ENCODE measurements at regions of chr2 and their contacts with region 1.

Region 1: GRCh38 chr2:27754138-27754588 is 17.4 kb upstream of the MRPL33 start:
- DNase-seq: peak; percentile 72 to 86 (median 73)
- ATAC-seq: peak; percentile 91
- H3K4me3 ChIP-seq: no peak overlapping the region
- H3K27ac ChIP-seq: no peak overlapping the region
- H3K4me1 ChIP-seq: peaks cover 10 to 18% of the 10 kb centered on the region in 2 experiments
- H3K27me3 ChIP-seq: no peaks in the 10 kb centered on the region
- CTCF ChIP-seq: peak; percentile 93 to 96 (median 95)
- EP300 ChIP-seq: no peak; the same call in 1 of the 2 replicates
- POLR2A ChIP-seq: no peak
- RAD21 ChIP-seq: peak; percentile 93 to 95

Region 2: DNA sequence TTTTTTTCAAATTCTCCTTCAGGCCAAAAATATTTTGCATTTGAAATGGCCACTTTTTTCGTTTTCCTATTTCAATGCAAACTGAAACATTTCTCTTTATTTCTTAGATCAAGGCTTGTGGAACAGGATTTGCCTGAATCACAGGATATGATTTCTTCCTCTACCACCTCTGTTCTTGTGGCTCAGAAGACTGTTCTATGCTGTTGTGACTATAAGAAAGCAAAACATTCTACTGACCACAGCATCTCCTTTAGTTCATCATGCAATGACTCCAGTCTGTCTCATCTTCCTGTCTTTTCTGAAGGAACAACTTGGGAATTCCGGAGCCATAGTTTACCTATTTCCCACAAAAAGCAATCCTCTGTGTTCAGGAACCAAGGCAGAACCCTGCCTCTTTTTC is 187.5 kb before region 1 on chr2:
- CTCF ChIA-PET with region 1: no interaction called
- POLR2A ChIA-PET with region 1: no interaction called
- in situ Hi-C with region 1: no loop called
- intact Hi-C with region 1: no loop called
- DNase-seq: no peak
- ATAC-seq: no peak
- H3K4me3 ChIP-seq: no peak overlapping the region
- H3K27ac ChIP-seq: no peak overlapping the region
- H3K4me1 ChIP-seq: no peaks in the 10 kb centered on the region
- H3K27me3 ChIP-seq: peaks cover 0 to 20% of the 10 kb centered on the region in 2 experiments; a peak in 3 of 5 replicates
- CTCF ChIP-seq: no peak
- EP300 ChIP-seq: no peak
- POLR2A ChIP-seq: no peak
- RAD21 ChIP-seq: no peak

Region 3: GRCh38 chr2:27703638-27704341 is 50.4 kb before region 1 on chr2:
- CTCF ChIA-PET with region 1: interaction called, 17 read pairs
- POLR2A ChIA-PET with region 1: no interaction called
- in situ Hi-C with region 1: no loop called
- intact Hi-C with region 1: loop called (anchors 1 kb)
- DNase-seq: peak; percentile 81 to 89 (median 85)
- ATAC-seq: peak; percentile 94
- H3K4me3 ChIP-seq: no peak overlapping the region
- H3K27ac ChIP-seq: no peak overlapping the region
- H3K4me1 ChIP-seq: peaks cover 0 to 13% of the 10 kb centered on the region in 2 experiments; a peak in 4 of 5 replicates
- H3K27me3 ChIP-seq: no peaks in the 10 kb centered on the region
- CTCF ChIP-seq: peak; percentile 90 to 94 (median 93)
- EP300 ChIP-seq: 0 out of 2 replicates have a peak, but pooled peaks have one; percentile 15
- POLR2A ChIP-seq: no peak
- RAD21 ChIP-seq: peak; percentile 90 to 92

Region 4: DNA sequence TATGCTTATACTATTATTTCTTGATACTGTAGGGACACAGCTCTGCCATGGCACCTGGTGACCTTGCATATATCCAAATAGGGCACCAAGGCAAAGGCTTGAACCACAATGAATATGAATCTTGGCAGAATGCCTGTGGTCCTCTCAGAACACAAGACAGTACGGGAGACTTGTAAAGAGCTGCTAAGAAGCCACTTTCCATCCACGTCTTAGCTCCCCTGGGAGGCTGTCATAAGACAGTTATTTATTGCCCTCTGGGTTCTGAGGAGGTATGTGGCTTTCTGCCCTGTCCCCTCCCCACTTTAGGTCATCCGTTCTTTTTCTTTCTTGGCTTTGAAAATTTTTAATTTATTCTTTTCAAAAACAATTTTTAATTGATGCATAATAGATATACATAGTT is 12.5 kb before region 1 on chr2:
- CTCF ChIA-PET with region 1: no interaction called
- POLR2A ChIA-PET with region 1: interaction called, 10 read pairs
- in situ Hi-C with region 1: no loop called
- intact Hi-C with region 1: no loop called
- DNase-seq: no peak
- ATAC-seq: 0 out of 3 replicates have a peak, but pooled peaks have one; percentile 51
- H3K4me3 ChIP-seq: no peak overlapping the region
- H3K27ac ChIP-seq: no peak overlapping the region
- H3K4me1 ChIP-seq: no peaks in the 10 kb centered on the region; a peak in 1 of 5 replicates
- H3K27me3 ChIP-seq: peaks cover 5 to 16% of the 10 kb centered on the region in 2 experiments; a peak in 3 of 5 replicates
- CTCF ChIP-seq: no peak
- EP300 ChIP-seq: no peak
- POLR2A ChIP-seq: no peak
- RAD21 ChIP-seq: no peak

Region 5: DNA sequence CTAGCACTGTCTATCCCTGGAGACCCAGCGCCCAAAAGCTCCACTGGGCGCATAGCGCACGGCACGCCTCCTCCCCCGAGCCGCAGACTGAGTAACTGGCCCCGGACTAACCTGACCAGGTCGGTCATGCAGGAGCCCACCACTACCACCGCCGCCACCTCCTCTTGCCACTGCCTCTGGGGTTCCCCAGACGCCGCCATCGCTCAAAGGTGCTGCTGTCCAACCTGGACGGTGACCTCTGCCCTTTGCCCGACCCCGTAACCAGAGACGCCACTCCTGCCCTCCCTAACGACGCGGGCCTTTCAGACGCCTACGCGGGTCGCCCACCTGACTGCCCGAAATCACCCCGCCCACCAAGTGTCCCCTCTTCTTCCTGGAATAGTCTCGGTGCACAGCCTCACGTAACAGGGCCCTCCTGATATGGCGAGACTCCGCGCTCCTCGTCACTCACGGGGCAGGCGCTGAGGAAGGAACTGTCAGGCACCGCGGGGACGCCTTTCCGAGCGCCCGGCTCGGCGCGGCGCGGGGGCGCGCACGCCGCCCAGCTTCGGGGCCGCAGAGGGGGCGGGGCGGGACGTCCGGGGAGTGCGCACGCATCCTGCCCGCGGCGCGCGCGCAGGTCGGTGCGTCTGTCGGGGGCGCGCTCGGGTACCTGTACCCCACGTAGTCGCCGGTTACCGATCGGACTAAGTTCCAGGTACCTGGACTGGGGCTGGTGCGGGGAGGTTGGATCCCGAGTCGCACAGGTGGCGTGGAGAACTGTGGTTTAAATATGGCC is 136.2 kb after region 1 on chr2 and contains the starts of genes BABAM2 and RBKS:
- CTCF ChIA-PET with region 1: no interaction called
- POLR2A ChIA-PET with region 1: no interaction called
- in situ Hi-C with region 1: no loop called
- intact Hi-C with region 1: loop called (anchors 10 kb)
- DNase-seq: peak; percentile 91 to 97 (median 96)
- ATAC-seq: peak; percentile 93
- H3K4me3 ChIP-seq: peak within 1 kb of the TSS; percentile 57
- H3K27ac ChIP-seq: peak within 1 kb of the TSS; percentile 93
- H3K4me1 ChIP-seq: peaks cover 6 to 10% of the 10 kb centered on the region in 2 experiments; a peak in 4 of 5 replicates
- H3K27me3 ChIP-seq: no peaks in the 10 kb centered on the region
- CTCF ChIP-seq: no peak
- EP300 ChIP-seq: no peak
- POLR2A ChIP-seq: peak; percentile 80
- RAD21 ChIP-seq: peak in 1 of 2 experiments; percentile 6; a peak in 1 of 4 replicates
- polyA plus RNA-seq, gene BABAM2: 35.2 to 37.4 TPM
- polyA plus RNA-seq, gene RBKS: 0.06 to 0.24 TPM

Region 6: DNA sequence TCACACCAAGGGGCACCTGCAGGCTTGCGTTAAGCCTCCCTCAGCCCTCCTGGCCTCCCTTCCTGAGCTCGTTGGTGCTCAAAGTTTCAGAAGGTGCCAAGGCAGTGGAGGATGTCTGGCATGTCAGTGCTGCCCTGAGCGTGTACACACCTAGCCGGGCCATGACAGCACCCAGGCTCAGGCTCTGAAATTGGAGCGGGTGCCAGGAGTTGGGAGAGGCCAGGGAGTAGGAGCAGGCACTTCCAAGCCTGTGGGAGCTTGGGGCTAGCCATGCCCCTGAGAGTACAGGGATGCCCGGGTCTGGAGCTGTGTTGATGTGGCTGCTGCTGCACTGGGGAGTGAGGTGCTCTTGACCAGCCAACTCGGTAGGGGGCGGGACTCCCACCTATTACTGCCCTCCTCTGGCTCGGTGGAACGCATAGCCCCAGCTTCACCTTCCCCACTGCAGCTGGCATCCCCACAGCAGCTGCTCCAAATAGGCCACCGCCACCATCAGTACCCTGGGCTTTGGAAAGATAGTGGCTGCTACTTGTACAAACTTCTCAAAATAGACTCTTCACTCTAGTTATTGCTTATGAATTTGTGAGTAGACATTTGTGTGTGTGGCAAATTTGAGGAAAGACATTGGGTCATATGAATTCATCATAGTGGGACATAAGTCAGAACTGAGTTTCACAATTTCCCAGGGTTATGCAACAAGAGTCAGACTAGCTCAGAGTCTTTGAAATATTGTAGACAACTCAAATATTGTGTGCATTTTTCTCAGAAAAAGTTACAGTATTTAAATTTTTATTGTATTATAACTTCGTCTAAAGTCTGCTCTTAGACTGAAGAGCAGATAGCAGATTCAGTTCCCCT is 1327.0 kb after region 1 on chr2:
- CTCF ChIA-PET with region 1: no interaction called
- POLR2A ChIA-PET with region 1: no interaction called
- in situ Hi-C with region 1: no loop called
- intact Hi-C with region 1: no loop called
- DNase-seq: no peak
- ATAC-seq: no peak
- H3K4me3 ChIP-seq: no peak overlapping the region
- H3K27ac ChIP-seq: no peak overlapping the region
- H3K4me1 ChIP-seq: no peaks in the 10 kb centered on the region
- H3K27me3 ChIP-seq: peaks cover 2 to 10% of the 10 kb centered on the region in 2 experiments; a peak in 3 of 5 replicates
- CTCF ChIP-seq: peak in 1 of 3 experiments; percentile 16; a peak in 1 of 6 replicates
- EP300 ChIP-seq: no peak
- POLR2A ChIP-seq: no peak
- RAD21 ChIP-seq: no peak